MCF 10A (cell line): ENCODE measurements at regions of chr12 and their contacts with region 1.

Region 1: GRCh38 chr12:52390739-52391617 is 5.5 kb upstream of the KRT84 start:
- DNase-seq: peak; percentile 67
- H3K4me3 Mint-ChIP-seq: no peak overlapping the region
- H3K27ac Mint-ChIP-seq: no peak overlapping the region
- H3K4me1 Mint-ChIP-seq: peaks cover 24% of the 10 kb centered on the region
- H3K27me3 Mint-ChIP-seq: no peaks in the 10 kb centered on the region
- CTCF ChIP-seq: peak; percentile 86

Region 2: DNA sequence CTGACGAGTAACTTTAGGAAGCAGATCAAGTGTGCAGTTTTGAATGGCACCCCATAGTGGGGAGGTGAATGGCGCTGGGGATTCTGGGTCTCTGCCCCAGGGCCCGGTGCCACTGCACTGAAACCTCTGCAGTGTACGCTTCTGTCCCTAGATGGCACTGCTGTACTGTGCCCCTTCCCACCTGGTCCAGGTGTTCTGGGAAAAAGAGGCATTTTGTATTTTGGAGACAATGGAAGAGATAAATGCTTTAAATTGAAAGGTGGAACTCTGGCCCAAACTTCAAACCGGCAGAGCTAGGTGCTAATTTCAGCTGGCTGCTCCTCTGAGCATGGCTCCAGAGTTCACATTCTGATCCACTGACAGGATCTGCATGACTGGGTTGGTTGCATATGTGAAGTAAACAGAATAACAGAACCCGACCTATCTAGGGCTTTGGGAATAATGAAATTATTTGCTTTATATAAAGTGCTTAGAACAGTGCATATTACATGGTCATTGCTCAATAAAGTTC is 251.4 kb before region 1 on chr12:
- CTCF ChIA-PET with region 1: interaction called, 3 read pairs
- POLR2A ChIA-PET with region 1: no interaction called
- intact Hi-C with region 1: loop called (anchors 5 kb)
- DNase-seq: peak; percentile 75
- H3K4me3 Mint-ChIP-seq: no peak overlapping the region
- H3K27ac Mint-ChIP-seq: no peak overlapping the region
- H3K4me1 Mint-ChIP-seq: peaks cover 25% of the 10 kb centered on the region
- H3K27me3 Mint-ChIP-seq: no peaks in the 10 kb centered on the region
- CTCF ChIP-seq: peak; percentile 97

Region 3: GRCh38 chr12:52442600-52443061 is 51.7 kb after region 1 on chr12:
- CTCF ChIA-PET with region 1: interaction called, 3 read pairs
- POLR2A ChIA-PET with region 1: interaction called, 3 read pairs
- intact Hi-C with region 1: loop called (anchors 10 kb)
- DNase-seq: peak; percentile 98
- H3K4me3 Mint-ChIP-seq: no peak overlapping the region
- H3K27ac Mint-ChIP-seq: no peak overlapping the region
- H3K4me1 Mint-ChIP-seq: peaks cover 35% of the 10 kb centered on the region
- H3K27me3 Mint-ChIP-seq: no peaks in the 10 kb centered on the region
- CTCF ChIP-seq: no peak

Region 4: GRCh38 chr12:52506858-52507715 is 116.1 kb after region 1 on chr12:
- CTCF ChIA-PET with region 1: interaction called, 40 read pairs
- POLR2A ChIA-PET with region 1: interaction called, 15 read pairs
- intact Hi-C with region 1: loop called (anchors 1 kb)
- DNase-seq: peak; percentile 75
- H3K4me3 Mint-ChIP-seq: no peak overlapping the region
- H3K27ac Mint-ChIP-seq: peak overlapping the region; percentile 4
- H3K4me1 Mint-ChIP-seq: peaks cover 18% of the 10 kb centered on the region
- H3K27me3 Mint-ChIP-seq: no peaks in the 10 kb centered on the region
- CTCF ChIP-seq: peak; percentile 50

Region 5: GRCh38 chr12:52582971-52583456 is 192.0 kb after region 1 on chr12:
- CTCF ChIA-PET with region 1: interaction called, 4 read pairs
- POLR2A ChIA-PET with region 1: interaction called, 3 read pairs
- intact Hi-C with region 1: loop called (anchors 1 kb)
- DNase-seq: peak; percentile 82
- H3K4me3 Mint-ChIP-seq: no peak overlapping the region
- H3K27ac Mint-ChIP-seq: no peak overlapping the region
- H3K4me1 Mint-ChIP-seq: peaks cover 26% of the 10 kb centered on the region
- H3K27me3 Mint-ChIP-seq: no peaks in the 10 kb centered on the region
- CTCF ChIP-seq: peak; percentile 76